CD8-positive, alpha-beta T cell (primary cell): ENCODE measurements at regions of chr10 and their contacts with region 1.

Region 1: GRCh38 chr10:30348378-30348776 is 701 bp downstream of the MTPAP start:
- DNase-seq: no peak
- ATAC-seq: peak; percentile 16
- H3K4me3 ChIP-seq: peak overlapping the region; percentile 95 to 98
- H3K4me3 Mint-ChIP-seq: peak overlapping the region; percentile 91
- H3K27ac ChIP-seq: peak overlapping the region; percentile 79 to 84
- H3K27ac Mint-ChIP-seq: peak overlapping the region; percentile 95
- H3K4me1 ChIP-seq: peaks cover 38% of the 10 kb centered on the region
- H3K4me1 Mint-ChIP-seq: peaks cover 51% of the 10 kb centered on the region
- H3K27me3 ChIP-seq: no peaks in the 10 kb centered on the region
- H3K27me3 Mint-ChIP-seq: no peaks in the 10 kb centered on the region
- CTCF ChIP-seq: no peak

Region 2: DNA sequence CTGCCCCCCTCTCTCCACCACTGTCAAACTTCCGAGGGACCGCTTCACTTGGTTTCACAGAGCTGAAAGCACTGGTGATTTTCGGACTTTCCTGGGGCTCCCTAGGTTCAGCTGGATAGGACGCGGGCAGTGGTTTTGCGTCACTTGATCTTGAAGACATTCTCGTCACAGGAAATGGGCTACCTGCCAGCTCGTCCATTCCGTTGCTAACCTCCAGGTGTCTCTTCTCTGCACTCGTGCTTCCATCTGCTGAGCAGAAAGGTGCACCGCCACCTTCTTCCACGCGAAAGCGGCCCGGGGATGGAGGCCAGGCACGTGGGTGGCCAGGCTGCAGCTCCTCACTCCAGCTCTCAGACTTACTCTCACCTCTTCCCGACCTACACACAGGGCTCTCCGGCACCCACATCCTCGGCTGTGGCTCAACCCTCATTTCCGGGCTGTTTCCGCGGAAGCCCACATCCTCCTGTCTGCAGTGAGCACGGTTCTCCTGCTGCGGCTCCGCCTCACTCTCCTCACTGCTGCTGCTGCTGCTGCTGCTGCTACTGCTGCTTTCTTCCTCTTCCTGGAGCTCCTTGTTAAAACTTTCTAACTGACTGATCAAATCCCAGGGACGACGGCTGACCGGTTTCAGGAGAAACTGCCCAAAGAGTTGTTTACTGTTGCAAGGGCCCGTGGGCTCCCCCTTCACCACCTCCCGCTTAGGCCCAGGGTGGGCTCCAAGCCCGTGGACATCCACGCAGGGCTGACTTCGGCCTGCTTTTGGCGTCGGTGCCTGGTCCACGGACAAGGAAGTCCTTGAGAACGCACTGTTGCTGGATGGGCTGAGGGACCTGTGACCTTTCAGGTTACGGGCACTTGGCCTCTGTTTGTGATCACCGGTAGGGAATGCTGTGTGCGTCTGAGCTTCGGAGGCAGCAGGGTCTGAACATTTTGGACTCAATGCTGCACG is 321.0 kb before region 1 on chr10:
- CTCF ChIA-PET with region 1: no interaction called
- POLR2A ChIA-PET with region 1: interaction called, 5 read pairs
- intact Hi-C with region 1: loop called in 1 of 2 experiments (anchors 2 kb)
- DNase-seq: peak; percentile 79 to 96 (median 85)
- ATAC-seq: peak; percentile 88
- H3K4me3 ChIP-seq: peak overlapping the region; percentile 33 to 53
- H3K4me3 Mint-ChIP-seq: peak overlapping the region; percentile 62
- H3K27ac ChIP-seq: peak overlapping the region in 1 of 2 experiments; percentile 41
- H3K27ac Mint-ChIP-seq: peak overlapping the region; percentile 80
- H3K4me1 ChIP-seq: peaks cover 37% of the 10 kb centered on the region
- H3K4me1 Mint-ChIP-seq: peaks cover 35% of the 10 kb centered on the region
- H3K27me3 ChIP-seq: peaks cover 24 to 34% of the 10 kb centered on the region in 2 experiments
- H3K27me3 Mint-ChIP-seq: peaks cover 55% of the 10 kb centered on the region
- CTCF ChIP-seq: peak; percentile 32

Region 3: DNA sequence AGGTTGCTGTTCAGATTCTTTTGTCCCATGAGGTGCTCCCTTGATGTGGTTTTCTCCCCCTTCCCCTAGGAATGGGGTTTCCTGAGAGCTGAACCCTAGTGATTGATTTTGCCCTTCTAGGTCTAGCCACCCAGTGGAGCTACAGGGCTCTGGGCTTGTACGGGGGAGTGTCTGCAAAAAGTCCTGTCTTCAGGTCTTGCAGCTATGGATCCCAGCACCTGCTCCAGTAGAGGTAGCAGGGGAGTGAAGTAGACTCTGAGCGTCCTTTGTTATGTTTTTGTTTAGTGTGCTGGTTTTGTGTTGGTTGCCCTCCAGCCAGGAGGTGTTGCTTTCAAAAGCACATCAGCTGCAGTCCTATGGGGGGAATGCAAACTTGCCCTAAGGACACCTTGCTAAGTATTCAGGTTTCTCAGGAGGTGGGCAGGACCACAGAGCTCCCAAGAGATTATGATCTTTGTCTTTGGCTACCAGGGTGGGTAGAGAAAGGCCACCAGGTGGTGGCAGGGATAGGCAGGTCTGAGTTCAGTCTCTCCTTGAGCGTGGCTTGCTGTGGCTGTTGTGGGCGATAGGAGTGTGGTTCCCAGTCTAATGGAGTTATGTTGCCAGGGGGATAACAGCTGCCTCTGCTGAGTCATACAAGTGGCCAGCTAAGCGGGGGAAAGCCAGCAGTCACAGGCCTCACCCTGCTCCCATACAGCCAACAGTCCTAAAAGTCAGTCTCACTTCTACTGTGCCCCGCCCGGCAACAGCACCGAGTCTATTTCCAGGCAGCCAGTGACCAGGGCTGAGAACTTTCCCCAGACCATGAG is 196.6 kb before region 1 on chr10:
- CTCF ChIA-PET with region 1: no interaction called
- POLR2A ChIA-PET with region 1: no interaction called
- intact Hi-C with region 1: no loop called
- DNase-seq: no peak
- ATAC-seq: no peak
- H3K4me3 ChIP-seq: no peak overlapping the region
- H3K4me3 Mint-ChIP-seq: no peak overlapping the region
- H3K27ac ChIP-seq: no peak overlapping the region
- H3K27ac Mint-ChIP-seq: no peak overlapping the region
- H3K4me1 ChIP-seq: no peaks in the 10 kb centered on the region
- H3K4me1 Mint-ChIP-seq: no peaks in the 10 kb centered on the region
- H3K27me3 ChIP-seq: no peaks in the 10 kb centered on the region
- H3K27me3 Mint-ChIP-seq: peaks cover 45% of the 10 kb centered on the region
- CTCF ChIP-seq: no peak

Region 4: DNA sequence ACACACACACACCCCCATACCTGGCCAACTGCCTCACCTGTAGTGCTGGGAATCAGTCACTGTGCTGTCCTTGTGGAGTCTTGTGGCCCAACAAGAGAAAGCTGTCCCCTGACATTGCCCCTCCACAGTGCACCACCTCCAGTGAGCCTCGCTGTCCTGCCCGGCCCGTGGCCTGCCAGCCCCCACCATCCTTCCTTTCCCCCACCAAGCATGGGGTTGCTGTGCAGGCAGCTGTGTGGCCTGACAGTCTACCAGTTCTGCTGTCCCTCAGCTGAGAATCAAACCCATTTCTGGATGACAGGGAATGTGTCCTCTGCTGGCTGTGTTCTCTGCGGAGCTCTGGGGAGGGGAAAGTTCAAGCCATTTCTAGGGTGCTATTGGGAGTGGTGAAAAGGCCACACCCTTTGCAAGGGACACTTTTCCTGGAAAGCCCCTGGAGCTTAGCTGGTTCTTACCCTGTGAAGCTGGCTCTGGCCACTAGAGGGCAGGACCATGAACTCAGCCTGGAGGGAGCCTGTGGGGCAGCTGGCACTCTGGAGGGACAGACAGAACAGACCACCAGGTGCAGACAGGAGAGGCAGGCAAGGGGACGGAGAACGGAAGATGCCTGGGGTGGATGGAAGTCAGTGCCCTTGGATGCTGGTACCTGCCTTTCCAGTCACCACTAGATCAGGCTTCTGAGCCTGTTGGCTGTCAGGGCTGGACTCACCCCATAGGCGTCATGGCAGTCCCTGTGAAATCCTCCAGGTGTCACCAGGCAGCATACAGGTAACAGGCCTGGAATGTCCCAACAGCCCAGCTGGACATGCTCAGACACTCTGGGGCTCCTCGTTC is 11.2 kb after region 1 on chr10:
- CTCF ChIA-PET with region 1: interaction called, 13 read pairs
- POLR2A ChIA-PET with region 1: no interaction called
- intact Hi-C with region 1: no loop called
- DNase-seq: peak; percentile 30 to 76 (median 59)
- ATAC-seq: peak; percentile 88
- H3K4me3 ChIP-seq: no peak overlapping the region
- H3K4me3 Mint-ChIP-seq: no peak overlapping the region
- H3K27ac ChIP-seq: no peak overlapping the region
- H3K27ac Mint-ChIP-seq: no peak overlapping the region
- H3K4me1 ChIP-seq: peaks cover 3% of the 10 kb centered on the region
- H3K4me1 Mint-ChIP-seq: no peaks in the 10 kb centered on the region
- H3K27me3 ChIP-seq: peaks cover 0 to 4% of the 10 kb centered on the region in 2 experiments
- H3K27me3 Mint-ChIP-seq: peaks cover 3% of the 10 kb centered on the region
- CTCF ChIP-seq: peak; percentile 60

Region 5: DNA sequence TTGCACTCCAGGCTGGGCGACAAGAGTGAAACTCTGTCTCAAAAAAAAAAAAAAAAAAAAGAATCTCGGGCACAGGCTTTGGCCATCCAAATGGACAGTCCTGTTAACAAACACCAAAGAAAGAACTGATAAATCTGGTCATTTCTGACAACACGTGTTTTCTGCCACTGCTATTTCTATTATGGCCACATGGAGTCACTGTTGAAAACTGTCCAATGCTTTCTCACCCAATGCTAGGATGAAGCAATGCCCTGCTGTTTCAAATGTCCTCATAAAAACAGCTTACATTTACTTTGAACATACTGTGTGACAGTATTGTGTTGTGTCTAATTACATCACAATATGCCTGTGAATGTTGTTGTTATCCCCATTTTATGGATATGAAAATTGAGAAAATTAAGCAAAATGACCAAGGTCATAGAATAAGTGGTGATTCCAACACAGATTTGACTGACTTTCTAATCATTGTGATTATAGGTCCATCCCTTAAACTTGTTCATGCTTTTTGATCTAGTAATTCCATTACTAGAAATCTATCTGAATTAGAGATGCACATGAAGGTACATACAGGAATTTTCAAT is 65.7 kb after region 1 on chr10:
- CTCF ChIA-PET with region 1: no interaction called
- POLR2A ChIA-PET with region 1: no interaction called
- intact Hi-C with region 1: loop called in 1 of 2 experiments (anchors 5 kb)
- DNase-seq: peak in 2 of 9 experiments; percentile 66 to 78
- ATAC-seq: peak; percentile 73
- H3K4me3 ChIP-seq: no peak overlapping the region
- H3K4me3 Mint-ChIP-seq: no peak overlapping the region
- H3K27ac ChIP-seq: no peak overlapping the region
- H3K27ac Mint-ChIP-seq: no peak overlapping the region
- H3K4me1 ChIP-seq: peaks cover 10% of the 10 kb centered on the region
- H3K4me1 Mint-ChIP-seq: peaks cover 9% of the 10 kb centered on the region
- H3K27me3 ChIP-seq: no peaks in the 10 kb centered on the region
- H3K27me3 Mint-ChIP-seq: no peaks in the 10 kb centered on the region
- CTCF ChIP-seq: peak; percentile 66

Region 6: GRCh38 chr10:30433730-30434272 is 85.4 kb after region 1 on chr10 and contains the start of gene MAP3K8:
- CTCF ChIA-PET with region 1: no interaction called
- POLR2A ChIA-PET with region 1: no interaction called
- intact Hi-C with region 1: loop called in 1 of 2 experiments (anchors 5 kb)
- DNase-seq: peak; percentile 62 to 95 (median 81)
- ATAC-seq: peak; percentile 76
- H3K4me3 ChIP-seq: peak within 1 kb of the TSS; percentile 84 to 92
- H3K4me3 Mint-ChIP-seq: peak within 1 kb of the TSS; percentile 91
- H3K27ac ChIP-seq: peak within 1 kb of the TSS; percentile 50 to 90
- H3K27ac Mint-ChIP-seq: peak within 1 kb of the TSS; percentile 87
- H3K4me1 ChIP-seq: peaks cover 25% of the 10 kb centered on the region
- H3K4me1 Mint-ChIP-seq: peaks cover 44% of the 10 kb centered on the region
- H3K27me3 ChIP-seq: peaks cover 0 to 3% of the 10 kb centered on the region in 2 experiments
- H3K27me3 Mint-ChIP-seq: no peaks in the 10 kb centered on the region
- CTCF ChIP-seq: no peak
- total RNA-seq, gene MAP3K8: 42.4 to 48.6 TPM